T-cell (primary cell): ENCODE measurements at regions of chr3 and their contacts with region 1.

Region 1: GRCh38 chr3:125437631-125438435 is 62.7 kb upstream of the ZNF148 start:
- DNase-seq: peak; percentile 5 to 78 (median 51)
- ATAC-seq: peak in 1 of 4 experiments; percentile 42
- H3K4me3 ChIP-seq: no peak overlapping the region
- H3K4me3 Mint-ChIP-seq: no peak overlapping the region
- H3K27ac ChIP-seq: no peak overlapping the region
- H3K27ac Mint-ChIP-seq: no peak overlapping the region
- H3K4me1 ChIP-seq: no peaks in the 10 kb centered on the region
- H3K4me1 Mint-ChIP-seq: peaks cover 0 to 2% (median 0%) of the 10 kb centered on the region in 3 donors
- H3K27me3 ChIP-seq: no peaks in the 10 kb centered on the region
- H3K27me3 Mint-ChIP-seq: no peaks in the 10 kb centered on the region

Region 2: DNA sequence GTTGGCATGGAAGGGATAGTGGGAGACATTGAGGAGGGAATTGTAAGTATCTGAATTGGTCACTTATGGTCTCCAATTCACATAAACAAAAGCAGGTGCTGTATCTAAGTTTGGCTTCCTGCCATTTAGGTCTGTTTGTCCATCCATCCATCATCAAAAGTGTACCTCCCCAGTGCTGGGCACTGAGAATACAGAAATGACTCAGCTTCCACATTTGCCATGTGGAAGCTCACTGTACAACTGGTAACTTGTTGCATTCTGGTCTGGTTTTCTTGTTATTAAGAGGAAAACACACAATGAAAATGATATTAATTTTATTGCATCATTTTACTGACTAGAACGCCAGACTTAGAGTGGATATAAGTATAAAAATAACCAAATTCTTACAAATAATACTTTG is 472.4 kb before region 1 on chr3:
- CTCF ChIA-PET with region 1: interaction called in 1 of 2 experiments, 11 read pairs
- POLR2A ChIA-PET with region 1: no interaction called
- DNase-seq: no peak
- ATAC-seq: no peak
- H3K4me3 ChIP-seq: no peak overlapping the region
- H3K4me3 Mint-ChIP-seq: no peak overlapping the region
- H3K27ac ChIP-seq: no peak overlapping the region
- H3K27ac Mint-ChIP-seq: no peak overlapping the region
- H3K4me1 ChIP-seq: no peaks in the 10 kb centered on the region
- H3K4me1 Mint-ChIP-seq: no peaks in the 10 kb centered on the region
- H3K27me3 ChIP-seq: no peaks in the 10 kb centered on the region
- H3K27me3 Mint-ChIP-seq: no peaks in the 10 kb centered on the region

Region 3: DNA sequence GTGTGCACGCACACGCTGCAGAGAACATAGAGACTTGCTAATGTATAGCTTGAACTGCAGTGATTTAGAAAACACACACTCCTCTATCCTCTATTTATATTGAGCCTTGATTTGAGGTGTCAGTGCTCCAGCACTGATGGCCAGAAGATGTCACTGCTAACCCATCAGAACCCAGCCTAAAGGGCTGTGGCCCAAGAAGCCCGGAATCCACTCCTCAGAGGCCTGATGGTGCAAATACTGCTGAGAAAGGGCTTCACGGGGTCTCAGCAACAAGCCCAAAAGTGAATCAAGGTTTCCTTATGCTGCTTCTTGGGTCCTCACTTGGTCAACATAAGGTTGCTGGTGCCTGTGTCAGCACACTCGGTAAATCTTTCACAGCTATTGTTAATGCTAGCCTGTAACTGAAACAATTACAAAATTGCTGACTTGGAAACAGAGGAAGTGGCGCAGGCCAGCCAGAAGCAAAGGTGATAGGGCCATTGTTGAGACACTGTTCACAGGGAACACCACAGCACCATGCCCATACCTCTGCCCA is 442.3 kb before region 1 on chr3:
- CTCF ChIA-PET with region 1: interaction called, 7 to 11 read pairs
- POLR2A ChIA-PET with region 1: no interaction called
- DNase-seq: peak; percentile 12 to 77 (median 50)
- ATAC-seq: peak; percentile 58 to 94 (median 86)
- H3K4me3 ChIP-seq: no peak overlapping the region
- H3K4me3 Mint-ChIP-seq: no peak overlapping the region
- H3K27ac ChIP-seq: no peak overlapping the region
- H3K27ac Mint-ChIP-seq: peak overlapping the region in 1 of 2 donors; percentile 22
- H3K4me1 ChIP-seq: peaks cover 9 to 13% of the 10 kb centered on the region in 2 experiments
- H3K4me1 Mint-ChIP-seq: peaks cover 3 to 8% (median 6%) of the 10 kb centered on the region in 3 donors
- H3K27me3 ChIP-seq: no peaks in the 10 kb centered on the region
- H3K27me3 Mint-ChIP-seq: no peaks in the 10 kb centered on the region

Region 4: DNA sequence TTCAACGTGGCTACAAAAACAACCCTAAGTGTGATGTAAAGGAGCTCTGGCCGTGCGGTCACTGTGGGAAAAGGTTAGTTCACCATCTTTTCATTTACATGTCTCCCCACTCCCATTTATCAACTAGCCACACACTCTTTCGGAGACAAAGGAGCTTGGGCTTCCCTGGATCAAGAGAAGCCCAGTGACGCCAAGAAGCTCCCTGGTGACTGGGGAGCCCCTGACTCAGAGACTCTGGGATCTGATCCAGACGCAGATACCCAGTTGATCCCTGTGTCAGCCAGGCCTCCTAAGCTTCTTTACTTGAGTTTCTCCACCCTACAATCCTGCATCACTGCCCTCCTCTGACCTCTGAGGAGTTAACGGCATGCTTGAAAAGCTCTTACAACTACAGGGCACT is 425.9 kb before region 1 on chr3:
- CTCF ChIA-PET with region 1: no interaction called
- POLR2A ChIA-PET with region 1: interaction called in 1 of 2 experiments, 11 read pairs
- DNase-seq: no peak
- ATAC-seq: no peak
- H3K4me3 ChIP-seq: no peak overlapping the region
- H3K4me3 Mint-ChIP-seq: no peak overlapping the region
- H3K27ac ChIP-seq: no peak overlapping the region
- H3K27ac Mint-ChIP-seq: peak overlapping the region in 1 of 2 donors; percentile 19
- H3K4me1 ChIP-seq: peaks cover 11 to 17% of the 10 kb centered on the region in 2 experiments
- H3K4me1 Mint-ChIP-seq: peaks cover 23 to 26% (median 25%) of the 10 kb centered on the region in 3 donors
- H3K27me3 ChIP-seq: no peaks in the 10 kb centered on the region
- H3K27me3 Mint-ChIP-seq: no peaks in the 10 kb centered on the region

Region 5: DNA sequence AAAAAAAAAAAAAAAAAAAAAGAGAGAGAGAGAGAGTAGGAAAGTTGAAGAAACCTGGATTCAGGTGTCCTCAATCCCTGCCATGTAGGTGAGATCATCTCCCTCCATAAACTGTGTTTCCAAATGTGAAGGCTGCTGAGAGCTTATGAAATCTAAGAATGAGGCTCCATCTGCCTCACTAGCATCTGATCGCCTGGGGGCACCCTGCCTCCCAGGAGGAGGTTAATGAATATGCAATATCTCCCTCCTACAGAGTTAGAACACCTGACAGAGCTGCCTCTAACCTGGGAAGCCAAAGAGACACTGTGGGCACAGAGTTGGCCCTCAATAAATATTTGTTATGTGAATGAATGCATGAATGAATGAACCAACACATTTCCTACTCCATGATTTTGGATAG is 38.9 kb before region 1 on chr3:
- CTCF ChIA-PET with region 1: no interaction called
- POLR2A ChIA-PET with region 1: interaction called in 1 of 2 experiments, 11 read pairs
- DNase-seq: no peak
- ATAC-seq: no peak
- H3K4me3 ChIP-seq: no peak overlapping the region
- H3K4me3 Mint-ChIP-seq: no peak overlapping the region
- H3K27ac ChIP-seq: no peak overlapping the region
- H3K27ac Mint-ChIP-seq: no peak overlapping the region
- H3K4me1 ChIP-seq: no peaks in the 10 kb centered on the region
- H3K4me1 Mint-ChIP-seq: no peaks in the 10 kb centered on the region
- H3K27me3 ChIP-seq: peaks cover 0 to 5% of the 10 kb centered on the region in 2 experiments
- H3K27me3 Mint-ChIP-seq: peaks cover 20 to 21% of the 10 kb centered on the region in 2 donors